Caco-2 (cell line): ENCODE measurements at regions of chr3 and their contacts with region 1.

Region 1: DNA sequence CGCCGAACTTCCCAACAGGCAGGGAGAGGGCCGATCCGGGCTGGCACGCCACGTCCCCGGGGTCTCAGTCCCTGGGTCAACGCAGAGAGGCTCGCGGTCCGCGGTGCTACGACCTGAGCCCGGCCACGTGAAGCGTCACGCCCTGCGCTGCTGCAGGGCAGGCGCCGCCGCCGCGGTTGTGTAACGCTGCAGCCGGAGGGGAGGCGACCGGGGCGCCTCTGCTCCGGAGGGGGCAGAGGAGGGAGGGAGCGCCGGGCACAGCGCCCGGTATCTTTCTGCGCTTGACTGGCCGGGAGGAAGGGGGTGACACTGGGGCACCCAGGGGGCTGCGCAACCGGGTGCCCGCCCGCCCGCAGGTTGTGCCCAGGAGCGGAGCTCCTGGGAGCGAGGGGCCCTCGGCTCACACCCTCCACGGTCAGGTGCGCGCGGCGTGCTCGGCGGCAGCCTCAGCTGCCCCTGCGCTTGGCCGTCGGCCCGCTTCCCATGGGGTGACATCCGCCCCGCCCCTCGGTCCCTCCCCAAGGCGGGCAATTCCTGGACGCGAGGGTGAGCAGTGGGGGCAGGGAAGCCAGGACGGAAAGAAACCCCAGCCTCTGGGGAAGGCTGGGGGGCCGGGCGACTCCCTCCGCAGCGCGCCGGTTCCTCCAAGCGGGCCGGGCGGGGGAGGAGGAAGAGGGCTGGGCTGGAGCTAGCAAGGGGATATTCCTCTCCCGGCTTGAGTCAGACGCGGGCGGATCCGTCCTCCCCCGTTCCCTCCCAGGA is 852 bp upstream of the BHLHE40 start:
- DNase-seq: peak; percentile 91 to 93
- H3K4me3 ChIP-seq: peak overlapping the region; percentile 70
- H3K4me3 Mint-ChIP-seq: peak overlapping the region; percentile 89
- H3K27ac Mint-ChIP-seq: peak overlapping the region; percentile 67
- H3K4me1 ChIP-seq: peaks cover 18% of the 10 kb centered on the region
- H3K4me1 Mint-ChIP-seq: peaks cover 17% of the 10 kb centered on the region
- H3K27me3 ChIP-seq: no peaks in the 10 kb centered on the region
- H3K27me3 Mint-ChIP-seq: no peaks in the 10 kb centered on the region
- CTCF ChIP-seq: no peak

Region 2: GRCh38 chr3:4722103-4722502 is 256.3 kb before region 1 on chr3:
- CTCF ChIA-PET with region 1: interaction called, 5 read pairs
- POLR2A ChIA-PET with region 1: interaction called, 3 read pairs
- intact Hi-C with region 1: loop called (anchors 1 kb)
- DNase-seq: peak in 1 of 2 experiments; percentile 42
- H3K4me3 ChIP-seq: no peak overlapping the region
- H3K4me3 Mint-ChIP-seq: no peak overlapping the region
- H3K27ac Mint-ChIP-seq: no peak overlapping the region
- H3K4me1 ChIP-seq: no peaks in the 10 kb centered on the region
- H3K4me1 Mint-ChIP-seq: peaks cover 6% of the 10 kb centered on the region
- H3K27me3 ChIP-seq: no peaks in the 10 kb centered on the region
- H3K27me3 Mint-ChIP-seq: no peaks in the 10 kb centered on the region
- CTCF ChIP-seq: peak in 1 of 2 experiments; percentile 20

Region 3: GRCh38 chr3:4945296-4945695 is 33.1 kb before region 1 on chr3:
- CTCF ChIA-PET with region 1: interaction called, 7 read pairs
- POLR2A ChIA-PET with region 1: interaction called, 3 read pairs
- intact Hi-C with region 1: loop called (anchors 2 kb)
- DNase-seq: no peak
- H3K4me3 ChIP-seq: no peak overlapping the region
- H3K4me3 Mint-ChIP-seq: no peak overlapping the region
- H3K27ac Mint-ChIP-seq: no peak overlapping the region
- H3K4me1 ChIP-seq: no peaks in the 10 kb centered on the region
- H3K4me1 Mint-ChIP-seq: no peaks in the 10 kb centered on the region
- H3K27me3 ChIP-seq: no peaks in the 10 kb centered on the region
- H3K27me3 Mint-ChIP-seq: no peaks in the 10 kb centered on the region
- CTCF ChIP-seq: no peak

Region 4: GRCh38 chr3:5057857-5058324 is 79.5 kb after region 1 on chr3:
- CTCF ChIA-PET with region 1: interaction called, 3 read pairs
- POLR2A ChIA-PET with region 1: no interaction called
- intact Hi-C with region 1: loop called (anchors 2 kb)
- DNase-seq: peak; percentile 75 to 76
- H3K4me3 ChIP-seq: no peak overlapping the region
- H3K4me3 Mint-ChIP-seq: no peak overlapping the region
- H3K27ac Mint-ChIP-seq: no peak overlapping the region
- H3K4me1 ChIP-seq: no peaks in the 10 kb centered on the region
- H3K4me1 Mint-ChIP-seq: no peaks in the 10 kb centered on the region
- H3K27me3 ChIP-seq: no peaks in the 10 kb centered on the region
- H3K27me3 Mint-ChIP-seq: no peaks in the 10 kb centered on the region
- CTCF ChIP-seq: peak; percentile 68 to 69

Region 5: GRCh38 chr3:5092018-5092417 is 113.6 kb after region 1 on chr3:
- CTCF ChIA-PET with region 1: no interaction called
- POLR2A ChIA-PET with region 1: no interaction called
- intact Hi-C with region 1: no loop called
- DNase-seq: peak; percentile 34 to 45
- H3K4me3 ChIP-seq: no peak overlapping the region
- H3K4me3 Mint-ChIP-seq: no peak overlapping the region
- H3K27ac Mint-ChIP-seq: no peak overlapping the region
- H3K4me1 ChIP-seq: peaks cover 12% of the 10 kb centered on the region
- H3K4me1 Mint-ChIP-seq: peaks cover 12% of the 10 kb centered on the region
- H3K27me3 ChIP-seq: no peaks in the 10 kb centered on the region
- H3K27me3 Mint-ChIP-seq: no peaks in the 10 kb centered on the region
- CTCF ChIP-seq: no peak

Region 6: DNA sequence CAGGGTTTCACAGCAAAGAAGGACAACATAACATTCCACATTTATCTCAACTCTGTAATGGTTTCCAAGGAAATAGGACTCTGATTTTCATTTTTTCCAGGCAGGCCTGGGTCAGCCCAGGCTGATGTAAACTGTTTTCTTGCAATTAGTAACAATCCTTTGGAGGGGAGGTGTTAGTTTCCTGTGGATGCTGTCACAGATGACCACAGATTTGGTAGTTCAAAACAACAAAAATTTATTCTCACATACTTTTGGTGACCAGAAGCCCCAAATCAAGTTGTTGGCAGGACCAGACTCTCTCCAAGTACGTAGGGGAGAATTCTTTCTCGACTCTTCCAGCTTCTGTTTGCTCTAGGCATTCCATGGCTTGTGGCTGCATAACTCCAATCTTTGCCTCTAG is 297.1 kb after region 1 on chr3:
- CTCF ChIA-PET with region 1: no interaction called
- POLR2A ChIA-PET with region 1: no interaction called
- intact Hi-C with region 1: no loop called
- DNase-seq: no peak
- H3K4me3 ChIP-seq: no peak overlapping the region
- H3K4me3 Mint-ChIP-seq: no peak overlapping the region
- H3K27ac Mint-ChIP-seq: peak overlapping the region; percentile 58
- H3K4me1 ChIP-seq: peaks cover 11% of the 10 kb centered on the region
- H3K4me1 Mint-ChIP-seq: no peaks in the 10 kb centered on the region
- H3K27me3 ChIP-seq: no peaks in the 10 kb centered on the region
- H3K27me3 Mint-ChIP-seq: no peaks in the 10 kb centered on the region
- CTCF ChIP-seq: no peak